OCI-LY7 (cell line): ENCODE measurements at regions of chr13 and their contacts with region 1.

Region 1: DNA sequence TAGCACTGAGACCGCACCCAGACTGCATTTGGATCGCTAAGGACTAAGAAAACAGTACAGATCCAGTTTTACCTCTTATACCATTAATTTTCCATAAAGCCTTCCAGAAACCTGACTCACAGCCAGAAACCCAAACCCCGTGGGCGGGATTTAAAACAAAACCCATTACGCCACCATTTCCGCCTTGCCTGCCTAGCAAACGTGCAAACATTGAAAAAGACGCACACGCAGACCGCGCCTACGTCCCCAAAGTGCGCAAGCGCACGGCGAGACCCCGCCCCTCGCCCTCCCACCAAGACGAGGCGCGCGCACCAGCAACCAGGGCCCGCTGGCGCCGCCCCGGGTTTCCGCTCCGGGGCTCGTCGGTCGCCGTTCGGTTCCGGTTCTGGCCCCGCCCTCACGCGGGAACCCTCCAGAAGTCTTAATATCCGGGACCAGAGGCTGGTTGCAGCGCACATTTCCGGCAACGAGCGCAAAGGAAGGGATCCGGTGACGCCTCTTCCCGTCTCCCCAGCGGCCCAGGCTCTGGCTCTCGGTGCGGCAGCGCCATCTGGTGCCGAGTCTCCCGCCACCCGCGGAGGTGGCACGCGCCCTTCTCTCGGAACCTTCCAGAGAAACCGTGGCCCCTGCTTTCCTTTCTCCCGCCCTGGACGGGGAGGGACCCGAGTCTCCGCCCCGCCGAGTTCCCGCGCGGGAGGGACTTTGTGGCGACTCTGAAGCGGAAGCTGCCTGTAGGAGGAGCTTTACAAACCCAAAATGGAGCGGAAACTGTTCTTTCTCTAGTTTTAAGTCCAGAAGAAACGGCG is 256.9 kb upstream of the STARD13 start:
- DNase-seq: peak; percentile 98
- H3K4me3 ChIP-seq: peak overlapping the region; percentile 80
- H3K27ac ChIP-seq: peak overlapping the region; percentile 98
- H3K4me1 ChIP-seq: peaks cover 58% of the 10 kb centered on the region
- CTCF ChIP-seq: peak; percentile 83

Region 2: DNA sequence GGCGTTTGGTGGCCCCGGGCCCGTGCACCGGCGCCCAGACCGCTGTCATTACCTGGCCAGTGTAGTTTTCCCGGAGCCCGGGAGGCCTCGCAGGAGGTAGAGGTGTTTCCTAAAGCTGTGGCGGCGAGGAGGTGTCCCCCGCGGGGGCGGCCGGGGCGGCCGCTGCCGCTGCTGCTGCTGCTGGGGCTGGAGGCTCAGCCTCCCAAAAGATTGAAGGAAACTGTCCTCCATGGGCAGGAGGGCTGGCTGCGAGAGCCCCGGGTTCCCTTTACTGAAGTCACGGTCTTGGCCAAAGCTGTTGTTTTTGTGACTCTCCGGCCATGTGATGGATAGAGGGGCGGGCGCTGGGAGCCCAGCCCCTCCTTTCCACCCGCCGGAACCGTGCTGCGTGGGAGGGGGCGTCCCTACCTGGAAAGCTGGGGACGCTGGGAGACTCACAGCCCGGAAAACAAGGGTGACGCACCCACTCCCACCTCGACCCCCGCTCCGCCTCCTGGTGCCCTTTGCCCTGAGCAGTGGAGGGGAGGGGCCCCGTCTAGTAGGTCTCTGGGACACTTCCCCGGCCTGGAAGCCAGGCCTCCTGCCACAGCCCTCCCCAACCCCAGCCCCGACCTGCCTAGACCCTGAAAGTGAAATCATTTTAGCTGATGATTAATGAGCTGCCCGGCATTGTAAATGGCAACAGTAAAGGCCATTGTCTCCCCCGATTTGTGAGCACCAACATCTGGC is 1114.5 kb before region 1 on chr13 and contains the start of gene N4BP2L1:
- CTCF ChIA-PET with region 1: no interaction called
- POLR2A ChIA-PET with region 1: no interaction called
- intact Hi-C with region 1: loop called (anchors 2 kb)
- DNase-seq: peak; percentile 66
- H3K4me3 ChIP-seq: peak within 1 kb of the TSS; percentile 96
- H3K27ac ChIP-seq: peak within 1 kb of the TSS; percentile 60
- H3K4me1 ChIP-seq: peaks cover 25% of the 10 kb centered on the region
- CTCF ChIP-seq: no peak
- total RNA-seq, gene N4BP2L1: 12.8 and 14.6 TPM in 2 replicates

Region 3: GRCh38 chr13:32639502-32640105 is 902.9 kb before region 1 on chr13:
- CTCF ChIA-PET with region 1: no interaction called
- POLR2A ChIA-PET with region 1: no interaction called
- intact Hi-C with region 1: loop called (anchors 10 kb)
- DNase-seq: peak; percentile 70
- H3K4me3 ChIP-seq: no peak overlapping the region
- H3K27ac ChIP-seq: no peak overlapping the region
- H3K4me1 ChIP-seq: peaks cover 37% of the 10 kb centered on the region
- CTCF ChIP-seq: peak; percentile 98

Region 4: GRCh38 chr13:33228648-33229445 is 313.6 kb before region 1 on chr13:
- CTCF ChIA-PET with region 1: no interaction called
- POLR2A ChIA-PET with region 1: no interaction called
- intact Hi-C with region 1: loop called (anchors 1 kb)
- DNase-seq: peak; percentile 64
- H3K4me3 ChIP-seq: no peak overlapping the region
- H3K27ac ChIP-seq: no peak overlapping the region
- H3K4me1 ChIP-seq: no peaks in the 10 kb centered on the region
- CTCF ChIP-seq: peak; percentile 96

Region 5: GRCh38 chr13:33743438-33744368 is 201.2 kb after region 1 on chr13:
- CTCF ChIA-PET with region 1: interaction called, 3 read pairs
- POLR2A ChIA-PET with region 1: interaction called, 6 read pairs
- intact Hi-C with region 1: loop called (anchors 1 kb)
- DNase-seq: peak; percentile 56
- H3K4me3 ChIP-seq: peak overlapping the region; percentile 11
- H3K27ac ChIP-seq: peak overlapping the region; percentile 99
- H3K4me1 ChIP-seq: peaks cover 86% of the 10 kb centered on the region
- CTCF ChIP-seq: no peak

Region 6: DNA sequence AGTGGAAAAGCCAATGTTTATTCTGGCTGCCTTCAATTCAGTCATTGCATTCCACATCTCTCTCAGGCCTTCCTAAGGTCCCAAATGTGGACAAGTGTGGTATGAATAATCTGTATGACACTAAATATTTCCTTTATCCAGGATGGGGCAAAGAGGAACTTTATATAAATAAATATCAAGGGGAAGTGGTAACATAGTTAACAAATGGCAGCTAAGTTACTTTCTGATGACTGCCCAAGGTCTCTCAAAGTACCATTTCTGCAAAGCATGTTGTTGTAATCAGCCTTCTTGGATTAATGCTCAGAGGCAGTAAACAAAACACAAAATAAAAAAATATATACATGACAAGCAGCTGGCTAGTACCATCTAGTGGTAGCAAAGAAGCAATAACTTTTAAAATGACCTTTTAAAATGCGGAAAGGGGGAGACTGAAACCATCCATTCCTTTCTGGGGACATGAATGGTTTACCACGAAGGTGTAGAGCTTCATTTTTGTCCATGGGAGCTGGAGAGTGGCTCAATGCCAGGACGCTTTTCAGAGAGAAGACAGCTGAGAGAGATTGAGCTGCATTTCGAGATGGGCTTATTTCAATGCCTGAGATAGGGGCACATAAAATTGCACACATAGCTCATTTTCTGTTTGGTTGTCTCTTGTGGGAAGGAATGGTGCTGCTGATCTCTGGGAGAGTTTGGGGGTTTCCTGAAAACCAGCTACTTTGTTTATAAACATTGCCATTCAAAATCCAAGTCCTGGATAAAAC is 534.6 kb after region 1 on chr13:
- CTCF ChIA-PET with region 1: no interaction called
- POLR2A ChIA-PET with region 1: interaction called, 4 read pairs
- intact Hi-C with region 1: loop called (anchors 2 kb)
- DNase-seq: peak; percentile 62
- H3K4me3 ChIP-seq: no peak overlapping the region
- H3K27ac ChIP-seq: no peak overlapping the region
- H3K4me1 ChIP-seq: peaks cover 9% of the 10 kb centered on the region
- CTCF ChIP-seq: peak; percentile 93

Region 7: GRCh38 chr13:34189946-34190345 is 647.5 kb after region 1 on chr13:
- CTCF ChIA-PET with region 1: no interaction called
- POLR2A ChIA-PET with region 1: no interaction called
- intact Hi-C with region 1: no loop called
- DNase-seq: no peak
- H3K4me3 ChIP-seq: no peak overlapping the region
- H3K27ac ChIP-seq: no peak overlapping the region
- H3K4me1 ChIP-seq: no peaks in the 10 kb centered on the region
- CTCF ChIP-seq: no peak